B cell (primary cell): ENCODE measurements at regions of chr10 and their contacts with region 1.

Region 1: GRCh38 chr10:76984559-76985443 is 652.8 kb downstream of the KCNMA1 start:
- DNase-seq: peak; percentile 71
- ATAC-seq: peak; percentile 28
- H3K4me3 ChIP-seq: no peak overlapping the region
- H3K4me3 Mint-ChIP-seq: no peak overlapping the region
- H3K27ac ChIP-seq: no peak overlapping the region
- H3K27ac Mint-ChIP-seq: no peak overlapping the region
- H3K4me1 ChIP-seq: no peaks in the 10 kb centered on the region
- H3K4me1 Mint-ChIP-seq: no peaks in the 10 kb centered on the region
- H3K27me3 ChIP-seq: peaks cover 0 to 3% (median 0%) of the 10 kb centered on the region in 4 experiments
- H3K27me3 Mint-ChIP-seq: no peaks in the 10 kb centered on the region
- CTCF ChIP-seq: peak; percentile 97

Region 2: DNA sequence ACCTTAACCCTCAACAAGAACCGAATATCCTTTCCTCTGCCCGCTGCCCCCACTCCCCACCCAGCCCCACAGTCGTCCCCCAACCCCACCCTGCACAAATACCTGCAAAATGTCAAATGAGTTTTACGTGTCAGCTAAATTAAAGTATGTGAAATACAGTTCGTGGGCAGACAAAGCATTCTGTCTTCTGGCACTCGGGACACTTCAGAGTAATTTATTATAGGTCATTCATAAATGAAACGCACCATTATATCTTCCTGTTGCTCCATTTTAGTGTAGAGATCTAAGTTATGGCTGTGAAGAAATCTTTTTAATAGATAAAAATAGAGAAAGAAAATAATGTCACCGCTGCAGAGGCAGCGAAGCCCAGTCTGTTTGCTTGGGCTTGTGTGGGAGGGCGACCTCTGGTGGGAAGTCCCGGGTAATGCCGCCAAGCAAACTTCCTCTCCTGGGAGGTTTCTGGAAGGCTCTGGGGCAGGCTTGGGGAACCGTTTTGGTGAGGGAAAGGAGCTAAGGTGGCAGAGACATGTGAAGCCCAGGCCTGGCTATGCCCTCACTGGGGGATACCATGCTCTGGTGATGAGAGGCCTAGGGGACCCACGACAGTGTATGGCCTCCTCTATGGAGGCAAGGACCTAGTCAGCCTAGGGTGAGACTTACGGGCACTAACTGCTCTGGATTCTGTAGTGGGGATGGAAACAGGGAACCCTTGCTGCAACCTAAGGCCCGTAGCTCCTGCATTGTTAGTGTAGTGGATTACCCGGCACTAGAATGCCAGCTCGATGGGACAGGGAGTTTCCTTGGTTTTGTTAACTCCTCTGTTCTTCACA is 948.5 kb before region 1 on chr10:
- CTCF ChIA-PET with region 1: interaction called, 3 read pairs
- POLR2A ChIA-PET with region 1: no interaction called
- intact Hi-C with region 1: loop called (anchors 5 kb)
- DNase-seq: peak; percentile 13
- ATAC-seq: peak; percentile 53
- H3K4me3 ChIP-seq: no peak overlapping the region
- H3K4me3 Mint-ChIP-seq: no peak overlapping the region
- H3K27ac ChIP-seq: no peak overlapping the region
- H3K27ac Mint-ChIP-seq: no peak overlapping the region
- H3K4me1 ChIP-seq: no peaks in the 10 kb centered on the region
- H3K4me1 Mint-ChIP-seq: no peaks in the 10 kb centered on the region
- H3K27me3 ChIP-seq: no peaks in the 10 kb centered on the region
- H3K27me3 Mint-ChIP-seq: peaks cover 11% of the 10 kb centered on the region
- CTCF ChIP-seq: peak; percentile 64

Region 3: GRCh38 chr10:76973515-76974278 is 11.1 kb before region 1 on chr10:
- CTCF ChIA-PET with region 1: interaction called, 25 read pairs
- POLR2A ChIA-PET with region 1: no interaction called
- intact Hi-C with region 1: no loop called
- DNase-seq: no peak
- ATAC-seq: no peak
- H3K4me3 ChIP-seq: no peak overlapping the region
- H3K4me3 Mint-ChIP-seq: no peak overlapping the region
- H3K27ac ChIP-seq: no peak overlapping the region
- H3K27ac Mint-ChIP-seq: no peak overlapping the region
- H3K4me1 ChIP-seq: no peaks in the 10 kb centered on the region
- H3K4me1 Mint-ChIP-seq: no peaks in the 10 kb centered on the region
- H3K27me3 ChIP-seq: peaks cover 0 to 2% (median 0%) of the 10 kb centered on the region in 4 experiments
- H3K27me3 Mint-ChIP-seq: no peaks in the 10 kb centered on the region
- CTCF ChIP-seq: no peak